ENCODE measurements at regions of chr10 and their contacts with region 1.

Region 1: DNA sequence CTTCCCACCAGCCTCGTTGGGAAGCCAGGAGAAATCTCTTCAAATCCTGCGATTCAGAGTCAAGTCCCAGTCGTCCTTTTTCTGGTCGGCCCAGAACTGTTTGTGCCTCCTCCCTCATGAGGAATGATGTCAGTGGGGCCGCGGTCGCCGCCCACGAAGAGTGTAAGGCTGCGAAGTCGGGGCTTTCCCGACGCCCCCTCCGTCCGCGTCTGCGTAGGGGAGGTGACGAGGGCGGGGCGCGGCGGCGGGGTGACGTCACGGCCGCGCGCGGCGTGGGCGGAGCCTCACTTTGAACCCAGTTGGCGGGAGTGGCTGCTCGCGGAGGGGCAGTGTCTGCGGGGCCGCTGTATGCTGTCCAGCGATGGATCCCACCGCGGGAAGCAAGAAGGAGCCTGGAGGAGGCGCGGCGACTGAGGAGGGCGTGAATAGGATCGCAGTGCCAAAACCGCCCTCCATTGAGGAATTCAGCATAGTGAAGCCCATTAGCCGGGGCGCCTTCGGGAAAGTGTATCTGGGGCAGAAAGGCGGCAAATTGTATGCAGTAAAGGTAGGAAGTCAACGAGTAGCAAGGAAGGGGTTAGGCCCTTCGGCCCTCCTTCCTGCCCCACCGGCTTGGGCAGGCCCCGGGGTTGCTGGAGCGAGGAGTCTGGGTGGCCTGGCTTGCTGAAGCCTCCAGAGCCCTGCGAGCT is at the start of gene MASTL:
- DNase-seq: peak; percentile 88
- ATAC-seq: peak; percentile 87
- H3K4me3 ChIP-seq: peak within 1 kb of the TSS; percentile 94 to 99 (median 96)
- H3K27ac ChIP-seq: peak within 1 kb of the TSS; percentile 98
- H3K4me1 ChIP-seq: peaks cover 41% of the 10 kb centered on the region
- H3K27me3 ChIP-seq: no peaks in the 10 kb centered on the region; a peak in 1 of 5 replicates
- CTCF ChIP-seq: peak; percentile 9; the same call in 1 of the 2 replicates
- EP300 ChIP-seq: no peak
- POLR2A ChIP-seq: peak; percentile 79 to 94
- RAD21 ChIP-seq: no peak
- total RNA-seq, gene MASTL: 18.0 and 24.3 TPM in 2 replicates

Region 2: DNA sequence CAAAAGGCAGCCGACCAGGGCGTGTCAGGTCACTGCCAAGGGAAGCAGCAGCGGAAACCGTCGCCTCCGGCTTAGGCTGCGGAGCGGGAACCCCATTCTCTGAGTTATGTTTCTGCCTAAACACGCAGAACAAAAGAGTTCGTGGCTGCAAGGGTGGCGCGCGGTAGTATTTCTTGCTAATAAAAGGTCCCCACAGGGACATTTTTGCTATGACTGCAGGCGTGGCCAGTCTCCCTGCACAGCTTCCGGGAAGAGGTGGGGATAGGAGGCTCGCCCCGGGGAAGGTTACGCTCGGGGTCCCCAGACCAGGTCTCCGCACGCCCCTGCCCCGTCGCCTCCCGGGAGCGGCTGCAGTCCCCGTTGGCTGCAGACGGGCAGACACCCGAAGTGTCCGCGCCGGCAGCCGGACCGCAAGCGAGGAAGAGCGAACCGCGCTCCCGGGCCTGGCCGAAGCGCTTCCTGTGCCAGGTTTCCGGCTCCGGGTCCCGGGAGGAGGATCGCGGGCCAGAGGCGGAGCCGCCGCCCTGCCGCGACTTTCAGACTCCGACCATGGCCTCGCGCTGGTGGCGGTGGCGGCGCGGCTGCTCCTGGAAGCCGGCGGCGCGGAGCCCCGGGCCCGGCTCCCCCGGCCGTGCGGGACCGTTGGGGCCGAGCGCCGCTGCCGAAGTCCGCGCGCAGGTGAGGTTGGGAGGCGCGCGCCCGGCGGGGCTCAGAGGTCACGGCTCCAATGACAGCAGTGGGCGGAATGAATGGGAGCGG is 457.9 kb before region 1 on chr10 and contains the start of gene PDSS1:
- CTCF ChIA-PET with region 1: no interaction called
- POLR2A ChIA-PET with region 1: no interaction called
- in situ Hi-C with region 1: no loop called
- intact Hi-C with region 1: loop called (anchors 10 kb)
- DNase-seq: peak; percentile 46
- ATAC-seq: peak; percentile 90
- H3K4me3 ChIP-seq: peak within 1 kb of the TSS; percentile 81 to 94 (median 93)
- H3K27ac ChIP-seq: peak within 1 kb of the TSS; percentile 89
- H3K4me1 ChIP-seq: peaks cover 43% of the 10 kb centered on the region
- H3K27me3 ChIP-seq: no peaks in the 10 kb centered on the region; a peak in 1 of 5 replicates
- CTCF ChIP-seq: no peak
- EP300 ChIP-seq: no peak
- POLR2A ChIP-seq: peak; percentile 74 to 75
- RAD21 ChIP-seq: peak; percentile 66; the same call in 1 of the 2 replicates
- total RNA-seq, gene PDSS1: 19.3 and 23.0 TPM in 2 replicates

Region 3: DNA sequence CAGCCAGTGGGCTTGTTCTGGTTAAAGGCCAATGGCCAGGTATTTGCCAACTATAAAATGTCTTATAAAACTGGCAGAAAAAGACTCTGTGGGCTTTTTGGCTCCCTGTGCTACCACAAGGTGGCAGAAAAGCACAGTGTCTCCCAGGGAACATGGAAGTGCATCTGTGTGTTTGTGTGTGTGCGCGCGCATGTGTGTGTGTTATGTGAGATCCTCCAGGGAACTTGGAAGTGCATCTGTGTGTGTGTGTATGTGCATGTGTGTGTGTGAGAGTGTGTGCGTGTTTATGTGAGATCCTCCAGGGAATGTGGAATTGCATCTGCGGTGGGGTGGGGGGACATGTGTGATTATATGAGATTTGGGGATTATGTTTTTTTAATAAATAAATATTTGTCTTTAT is 264.3 kb before region 1 on chr10:
- CTCF ChIA-PET with region 1: no interaction called
- POLR2A ChIA-PET with region 1: no interaction called
- in situ Hi-C with region 1: no loop called
- intact Hi-C with region 1: loop called (anchors 2 kb)
- DNase-seq: peak; percentile 72
- ATAC-seq: peak; percentile 82
- H3K4me3 ChIP-seq: no peak overlapping the region
- H3K27ac ChIP-seq: no peak overlapping the region
- H3K4me1 ChIP-seq: no peaks in the 10 kb centered on the region
- H3K27me3 ChIP-seq: peaks cover 0 to 4% of the 10 kb centered on the region in 2 experiments; a peak in 1 of 5 replicates
- CTCF ChIP-seq: peak; percentile 79
- EP300 ChIP-seq: no peak
- POLR2A ChIP-seq: no peak
- RAD21 ChIP-seq: peak; percentile 24; the same call in 1 of the 2 replicates

Region 4: GRCh38 chr10:27099916-27100812 is 55.0 kb before region 1 on chr10 and contains the start of gene ANKRD26:
- CTCF ChIA-PET with region 1: no interaction called
- POLR2A ChIA-PET with region 1: interaction called, 17 read pairs
- in situ Hi-C with region 1: no loop called
- intact Hi-C with region 1: loop called (anchors 2 kb)
- DNase-seq: peak; percentile 95
- ATAC-seq: peak; percentile 88
- H3K4me3 ChIP-seq: peak within 1 kb of the TSS; percentile 74 to 90 (median 81)
- H3K27ac ChIP-seq: peak within 1 kb of the TSS; percentile 85
- H3K4me1 ChIP-seq: peaks cover 20% of the 10 kb centered on the region
- H3K27me3 ChIP-seq: no peaks in the 10 kb centered on the region
- CTCF ChIP-seq: peak; percentile 23; the same call in 1 of the 2 replicates
- EP300 ChIP-seq: no peak
- POLR2A ChIP-seq: peak; percentile 89 to 94
- RAD21 ChIP-seq: 0 out of 2 replicates have a peak, but pooled peaks have one; percentile 29
- total RNA-seq, gene ANKRD26: 9.6 and 10.0 TPM in 2 replicates

Region 5: GRCh38 chr10:27169849-27170248 is 14.6 kb after region 1 on chr10:
- CTCF ChIA-PET with region 1: no interaction called
- POLR2A ChIA-PET with region 1: no interaction called
- in situ Hi-C with region 1: no loop called
- intact Hi-C with region 1: no loop called
- DNase-seq: no peak
- ATAC-seq: no peak
- H3K4me3 ChIP-seq: no peak overlapping the region
- H3K27ac ChIP-seq: no peak overlapping the region
- H3K4me1 ChIP-seq: no peaks in the 10 kb centered on the region
- H3K27me3 ChIP-seq: no peaks in the 10 kb centered on the region
- CTCF ChIP-seq: no peak
- EP300 ChIP-seq: no peak
- POLR2A ChIP-seq: no peak
- RAD21 ChIP-seq: no peak

Region 6: DNA sequence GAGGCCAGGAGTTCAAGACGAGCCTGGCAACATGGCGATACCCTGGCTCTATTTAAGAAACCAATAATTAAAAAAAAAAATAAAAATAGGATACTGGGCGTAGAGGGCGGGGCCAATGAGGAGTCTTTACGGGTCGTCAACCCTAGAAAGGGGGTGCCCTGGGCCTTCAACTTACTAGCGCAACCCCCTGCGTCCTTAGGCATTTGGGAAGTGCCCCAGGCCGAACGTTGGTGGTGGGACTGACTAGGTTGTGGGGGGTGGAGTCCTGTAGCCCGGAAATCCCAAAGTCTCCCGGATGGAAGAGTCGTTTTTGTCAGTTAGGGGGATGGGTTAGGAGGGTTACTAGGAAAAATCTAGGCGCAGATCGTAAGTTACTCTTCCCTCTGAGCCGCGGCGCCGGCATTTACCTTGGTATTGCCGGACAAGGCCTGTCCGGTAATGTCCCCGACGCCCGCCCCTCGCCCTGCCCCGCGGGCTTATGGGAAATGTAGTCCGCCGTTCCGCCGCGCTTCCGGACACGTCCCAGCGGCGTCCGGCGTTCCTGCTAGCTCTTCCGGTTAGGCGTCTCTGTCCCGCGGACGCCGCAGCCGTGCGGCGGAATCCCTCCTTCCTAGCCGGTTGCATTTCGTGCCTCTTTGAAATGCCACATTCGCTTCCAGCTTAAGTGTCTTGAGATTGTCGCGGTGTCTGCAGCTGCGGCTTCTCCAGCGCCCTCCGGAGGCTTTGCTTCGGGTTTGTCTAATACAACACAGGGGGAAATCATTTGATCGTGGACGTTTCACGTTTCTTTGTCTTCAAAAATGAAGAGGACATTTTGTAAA is 86.7 kb after region 1 on chr10:
- CTCF ChIA-PET with region 1: no interaction called
- POLR2A ChIA-PET with region 1: interaction called, 9 read pairs
- in situ Hi-C with region 1: no loop called
- intact Hi-C with region 1: loop called (anchors 2 kb)
- DNase-seq: peak; percentile 89
- ATAC-seq: peak; percentile 83
- H3K4me3 ChIP-seq: peak overlapping the region; percentile 86 to 95 (median 92)
- H3K27ac ChIP-seq: peak overlapping the region; percentile 97
- H3K4me1 ChIP-seq: peaks cover 29% of the 10 kb centered on the region
- H3K27me3 ChIP-seq: no peaks in the 10 kb centered on the region
- CTCF ChIP-seq: peak; percentile 43
- EP300 ChIP-seq: peak; percentile 51 to 59; a peak in 2 of 4 replicates
- POLR2A ChIP-seq: peak; percentile 80 to 93
- RAD21 ChIP-seq: no peak